Sigmoid colon (tissue), 7 donors: ENCODE measurements at regions of chr13 and their contacts with region 1.

Region 1: GRCh38 chr13:26707122-26708006 is 53.2 kb downstream of the GPR12 start:
- DNase-seq: no peak
- H3K4me3 ChIP-seq: no peak overlapping the region
- H3K27ac ChIP-seq: no peak overlapping the region
- H3K4me1 ChIP-seq: no peaks in the 10 kb centered on the region
- H3K27me3 ChIP-seq: no peaks in the 10 kb centered on the region
- CTCF ChIP-seq: peak in 3 of 4 experiments; percentile 22 to 50 (median 46)
- EP300 ChIP-seq: no peak
- POLR2A ChIP-seq: no peak

Region 2: GRCh38 chr13:26771796-26772195 is 64.4 kb after region 1 on chr13:
- intact Hi-C with region 1: no loop called
- DNase-seq: no peak
- H3K4me3 ChIP-seq: no peak overlapping the region
- H3K27ac ChIP-seq: no peak overlapping the region
- H3K4me1 ChIP-seq: no peaks in the 10 kb centered on the region
- H3K27me3 ChIP-seq: peaks cover 0 to 17% (median 8%) of the 10 kb centered on the region in 3 donors
- CTCF ChIP-seq: no peak
- EP300 ChIP-seq: no peak
- POLR2A ChIP-seq: no peak

Region 3: DNA sequence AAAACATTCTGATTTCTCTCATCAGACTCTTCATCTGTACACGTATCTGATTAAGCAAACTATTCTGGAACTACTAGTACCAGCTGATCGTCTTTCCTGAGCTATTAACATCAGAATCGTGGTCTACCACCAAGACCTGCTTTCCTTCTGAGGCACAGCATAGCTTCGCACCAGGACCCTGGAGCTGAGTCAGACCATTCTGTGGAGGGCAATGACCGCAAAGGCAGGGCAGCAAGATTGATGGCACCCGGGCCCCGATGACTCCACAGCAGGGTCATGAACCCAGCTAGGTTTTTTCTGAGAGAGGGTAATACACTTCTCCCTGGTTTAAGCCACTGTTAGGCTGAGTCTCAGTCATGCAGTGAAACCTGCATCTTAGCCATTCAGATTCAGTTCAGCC is 211.9 kb after region 1 on chr13:
- intact Hi-C with region 1: no loop called
- DNase-seq: no peak
- H3K4me3 ChIP-seq: no peak overlapping the region
- H3K27ac ChIP-seq: no peak overlapping the region
- H3K4me1 ChIP-seq: peaks cover 0 to 12% (median 5%) of the 10 kb centered on the region in 4 donors
- H3K27me3 ChIP-seq: peaks cover 0 to 23% (median 0%) of the 10 kb centered on the region in 3 donors
- CTCF ChIP-seq: no peak
- EP300 ChIP-seq: no peak
- POLR2A ChIP-seq: no peak

Region 4: GRCh38 chr13:26929971-26930730 is 222.8 kb after region 1 on chr13:
- intact Hi-C with region 1: loop called (anchors 1 kb)
- DNase-seq: peak; percentile 77
- H3K4me3 ChIP-seq: no peak overlapping the region
- H3K27ac ChIP-seq: no peak overlapping the region
- H3K4me1 ChIP-seq: no peaks in the 10 kb centered on the region
- H3K27me3 ChIP-seq: no peaks in the 10 kb centered on the region
- CTCF ChIP-seq: peak; percentile 65 to 92 (median 74)
- EP300 ChIP-seq: no peak
- POLR2A ChIP-seq: no peak

Region 5: GRCh38 chr13:27309967-27310598 is 602.7 kb after region 1 on chr13:
- intact Hi-C with region 1: no loop called
- DNase-seq: no peak
- H3K4me3 ChIP-seq: no peak overlapping the region
- H3K27ac ChIP-seq: no peak overlapping the region
- H3K4me1 ChIP-seq: no peaks in the 10 kb centered on the region
- H3K27me3 ChIP-seq: no peaks in the 10 kb centered on the region
- CTCF ChIP-seq: no peak
- EP300 ChIP-seq: no peak
- POLR2A ChIP-seq: no peak